Tibial artery (tissue), 4 donors: ENCODE measurements at regions of chr16 and their contacts with region 1.

Region 1: DNA sequence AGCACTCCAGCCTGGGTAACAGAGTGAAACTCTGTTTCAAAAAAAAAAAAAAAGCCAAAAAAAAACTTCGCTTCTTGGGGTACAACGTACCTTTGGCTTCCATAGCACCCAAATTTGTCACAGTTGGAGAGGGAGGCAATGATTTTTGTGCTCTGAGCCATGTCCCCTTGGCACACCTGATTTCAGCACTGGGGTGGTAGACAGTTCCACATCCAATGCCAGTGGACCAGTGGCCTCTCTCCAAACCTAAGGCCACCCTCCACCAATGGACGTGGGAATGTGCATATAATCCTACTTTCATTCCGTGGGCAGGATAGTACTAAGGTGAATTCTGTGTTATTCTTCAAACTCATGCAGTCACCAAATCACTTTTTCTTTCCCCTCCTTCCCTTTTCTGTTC is 47.5 kb downstream of the SALL1 start:
- DNase-seq: no peak
- H3K4me3 ChIP-seq: no peak overlapping the region
- H3K27ac ChIP-seq: no peak overlapping the region
- H3K4me1 ChIP-seq: no peaks in the 10 kb centered on the region
- H3K27me3 ChIP-seq: no peaks in the 10 kb centered on the region
- CTCF ChIP-seq: no peak

Region 2: GRCh38 chr16:49168126-49168525 is 1935.5 kb before region 1 on chr16:
- intact Hi-C with region 1: no loop called
- DNase-seq: no peak
- H3K4me3 ChIP-seq: no peak overlapping the region
- H3K27ac ChIP-seq: no peak overlapping the region
- H3K4me1 ChIP-seq: no peaks in the 10 kb centered on the region
- H3K27me3 ChIP-seq: no peaks in the 10 kb centered on the region
- CTCF ChIP-seq: no peak

Region 3: GRCh38 chr16:50045412-50045811 is 1058.2 kb before region 1 on chr16:
- intact Hi-C with region 1: loop called (anchors 5 kb)
- DNase-seq: no peak
- H3K4me3 ChIP-seq: no peak overlapping the region
- H3K27ac ChIP-seq: no peak overlapping the region
- H3K4me1 ChIP-seq: no peaks in the 10 kb centered on the region
- H3K27me3 ChIP-seq: peaks cover 0 to 6% of the 10 kb centered on the region in 2 donors
- CTCF ChIP-seq: no peak